Activated naive CD4-positive, alpha-beta T cell treated with anti-CD3 and anti-CD28 coated beads for 36 hours (primary cell): ENCODE measurements at regions of chr13 and their contacts with region 1.

Region 1: GRCh38 chr13:23375001-23375971 is 58.2 kb downstream of the SACS start:
- DNase-seq: peak; percentile 97
- H3K4me3 Mint-ChIP-seq: peak overlapping the region; percentile 73
- H3K27ac Mint-ChIP-seq: peak overlapping the region; percentile 59
- H3K4me1 Mint-ChIP-seq: peaks cover 71% of the 10 kb centered on the region
- H3K27me3 Mint-ChIP-seq: no peaks in the 10 kb centered on the region

Region 2: GRCh38 chr13:21670883-21671619 is 1704.2 kb before region 1 on chr13 and contains the start of gene FGF9:
- CTCF ChIA-PET with region 1: no interaction called
- intact Hi-C with region 1: loop called (anchors 5 kb)
- DNase-seq: peak; percentile 79
- H3K4me3 Mint-ChIP-seq: peak within 1 kb of the TSS; percentile 80
- H3K27ac Mint-ChIP-seq: no peak within 1 kb of the TSS
- H3K4me1 Mint-ChIP-seq: peaks cover 34% of the 10 kb centered on the region
- H3K27me3 Mint-ChIP-seq: peaks cover 32% of the 10 kb centered on the region
- total RNA-seq, gene FGF9: not detected

Region 3: GRCh38 chr13:23399347-23399746 is 24.1 kb after region 1 on chr13:
- CTCF ChIA-PET with region 1: no interaction called
- intact Hi-C with region 1: no loop called
- DNase-seq: no peak
- H3K4me3 Mint-ChIP-seq: no peak overlapping the region
- H3K27ac Mint-ChIP-seq: peak overlapping the region; percentile 67
- H3K4me1 Mint-ChIP-seq: no peaks in the 10 kb centered on the region
- H3K27me3 Mint-ChIP-seq: peaks cover 13% of the 10 kb centered on the region

Region 4: DNA sequence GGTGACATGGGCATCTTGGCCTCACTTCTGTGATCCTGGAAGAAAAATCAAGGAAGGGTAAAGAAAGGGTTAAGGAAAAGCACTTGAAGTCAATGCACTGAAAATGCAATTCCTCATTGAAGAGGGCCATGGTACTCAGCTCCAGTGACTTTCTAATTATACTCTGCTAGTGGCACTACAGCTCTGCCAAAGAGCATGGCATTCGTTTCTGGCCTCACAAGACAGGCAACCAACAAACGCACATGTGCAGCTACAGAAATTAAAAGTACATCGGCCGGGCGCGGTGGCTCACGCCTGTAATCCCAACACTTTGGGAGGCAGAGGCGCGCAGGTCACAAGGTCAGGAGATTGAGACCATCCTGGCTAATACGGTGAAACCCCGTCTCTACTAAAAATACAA is 36.4 kb after region 1 on chr13:
- CTCF ChIA-PET with region 1: interaction called, 3 read pairs
- intact Hi-C with region 1: loop called (anchors 2 kb)
- DNase-seq: no peak
- H3K4me3 Mint-ChIP-seq: no peak overlapping the region
- H3K27ac Mint-ChIP-seq: no peak overlapping the region
- H3K4me1 Mint-ChIP-seq: peaks cover 2% of the 10 kb centered on the region
- H3K27me3 Mint-ChIP-seq: no peaks in the 10 kb centered on the region

Region 5: DNA sequence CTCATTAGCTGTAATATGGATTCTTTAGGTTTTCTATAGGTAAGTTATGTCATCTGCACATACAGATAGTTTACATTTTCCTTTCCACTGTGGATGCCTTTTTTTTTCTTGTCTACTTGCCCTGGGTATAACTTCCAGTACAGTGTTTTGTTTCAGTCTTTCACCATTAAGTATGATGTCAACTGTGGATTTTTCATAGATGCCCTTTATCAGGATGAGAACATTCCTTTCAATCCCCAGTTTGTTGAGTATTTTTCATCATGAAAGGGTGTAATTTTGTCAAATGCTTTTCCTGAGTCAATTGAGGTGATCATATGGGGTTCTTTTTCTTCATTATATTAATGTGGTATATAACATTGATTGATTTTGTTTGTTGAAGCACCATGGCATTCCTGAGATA is 101.8 kb after region 1 on chr13:
- CTCF ChIA-PET with region 1: no interaction called
- intact Hi-C with region 1: no loop called
- DNase-seq: no peak
- H3K4me3 Mint-ChIP-seq: no peak overlapping the region
- H3K27ac Mint-ChIP-seq: no peak overlapping the region
- H3K4me1 Mint-ChIP-seq: no peaks in the 10 kb centered on the region
- H3K27me3 Mint-ChIP-seq: peaks cover 4% of the 10 kb centered on the region

Region 6: GRCh38 chr13:23752111-23753001 is 377.1 kb after region 1 on chr13:
- CTCF ChIA-PET with region 1: no interaction called
- intact Hi-C with region 1: loop called (anchors 5 kb)
- DNase-seq: no peak
- H3K4me3 Mint-ChIP-seq: no peak overlapping the region
- H3K27ac Mint-ChIP-seq: no peak overlapping the region
- H3K4me1 Mint-ChIP-seq: peaks cover 31% of the 10 kb centered on the region
- H3K27me3 Mint-ChIP-seq: no peaks in the 10 kb centered on the region

Region 7: DNA sequence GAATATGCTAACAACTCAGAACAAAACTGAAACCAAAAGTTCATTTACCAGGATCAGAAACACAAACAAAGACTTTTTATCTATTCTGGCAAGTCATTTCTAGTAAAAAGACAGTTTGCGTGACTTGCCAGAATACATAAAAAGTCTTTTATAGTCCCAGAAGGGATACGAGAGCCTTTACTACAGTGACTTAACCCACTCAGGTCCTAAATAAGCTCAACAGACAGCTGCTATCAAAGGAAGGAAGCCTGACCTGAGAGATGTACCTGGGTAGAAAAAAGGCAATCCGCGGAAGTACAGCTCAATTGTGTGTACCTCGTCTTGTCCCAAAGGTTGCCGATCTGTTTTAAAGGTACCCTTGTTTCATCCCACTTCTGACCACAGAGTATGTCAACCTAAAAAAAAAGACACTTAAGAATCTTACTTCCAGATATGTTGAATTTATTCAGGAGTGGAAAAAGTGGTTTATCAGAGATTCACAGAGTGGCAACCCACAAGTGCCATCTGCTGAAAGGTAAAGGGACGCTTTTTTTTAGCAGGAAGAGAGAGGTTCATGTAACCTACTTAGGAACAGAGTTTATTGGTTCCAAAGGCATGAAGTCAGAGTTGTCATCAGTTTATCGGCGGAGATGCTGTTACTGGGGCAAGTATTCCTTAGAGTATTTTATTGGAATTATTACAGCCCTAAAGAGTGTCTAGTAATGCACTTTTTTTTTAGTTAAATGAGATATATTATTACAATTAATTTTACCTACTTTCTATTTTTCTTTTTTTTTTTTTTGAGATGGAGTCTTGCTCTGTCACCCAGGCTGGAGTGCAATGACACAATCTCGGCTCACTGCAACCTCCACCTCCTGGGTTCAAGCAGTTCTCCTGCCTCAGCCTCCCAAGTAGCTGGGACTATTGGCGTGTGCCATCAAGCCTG is 591.7 kb after region 1 on chr13:
- CTCF ChIA-PET with region 1: no interaction called
- intact Hi-C with region 1: loop called (anchors 2 kb)
- DNase-seq: peak; percentile 38
- H3K4me3 Mint-ChIP-seq: peak overlapping the region; percentile 29
- H3K27ac Mint-ChIP-seq: peak overlapping the region; percentile 72
- H3K4me1 Mint-ChIP-seq: peaks cover 29% of the 10 kb centered on the region
- H3K27me3 Mint-ChIP-seq: no peaks in the 10 kb centered on the region

Region 8: DNA sequence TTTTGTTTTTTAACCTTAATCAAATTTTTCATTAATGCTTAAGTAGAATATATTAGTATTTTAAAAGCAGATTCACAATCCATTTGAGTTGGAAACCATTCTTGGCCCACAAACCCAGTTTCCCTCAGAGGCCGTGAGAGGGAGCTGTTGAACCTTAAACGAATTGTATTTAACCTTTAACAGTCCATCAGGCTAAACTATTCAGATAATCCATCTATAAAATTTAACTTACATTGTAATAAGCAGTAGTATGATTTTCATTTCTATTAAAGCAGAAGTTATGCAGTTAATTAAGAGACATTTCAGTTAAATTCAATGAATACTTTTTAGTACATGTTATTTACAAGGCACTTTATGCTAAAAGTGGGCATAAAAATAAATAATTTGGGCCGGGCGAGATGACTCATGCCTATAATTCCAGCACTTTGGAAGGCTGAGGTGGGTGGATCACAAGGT is 645.1 kb after region 1 on chr13:
- CTCF ChIA-PET with region 1: no interaction called
- intact Hi-C with region 1: no loop called
- DNase-seq: peak; percentile 67
- H3K4me3 Mint-ChIP-seq: no peak overlapping the region
- H3K27ac Mint-ChIP-seq: no peak overlapping the region
- H3K4me1 Mint-ChIP-seq: no peaks in the 10 kb centered on the region
- H3K27me3 Mint-ChIP-seq: no peaks in the 10 kb centered on the region

Region 9: GRCh38 chr13:24512197-24512907 is 1137.1 kb after region 1 on chr13 and contains the start of gene PARP4:
- CTCF ChIA-PET with region 1: no interaction called
- intact Hi-C with region 1: loop called (anchors 1 kb)
- DNase-seq: peak; percentile 72
- H3K4me3 Mint-ChIP-seq: peak within 1 kb of the TSS; percentile 87
- H3K27ac Mint-ChIP-seq: peak within 1 kb of the TSS; percentile 96
- H3K4me1 Mint-ChIP-seq: peaks cover 28% of the 10 kb centered on the region
- H3K27me3 Mint-ChIP-seq: peaks cover 4% of the 10 kb centered on the region
- total RNA-seq, gene PARP4: 10.1 to 10.9 TPM